ENCODE measurements at regions of chr11 and their contacts with region 1.

Region 1: GRCh38 chr11:114262681-114263512 is 33.3 kb upstream of the NNMT start:
- DNase-seq: peak; percentile 14
- ATAC-seq: peak; percentile 65
- H3K4me3 Mint-ChIP-seq: no peak overlapping the region
- H3K27ac Mint-ChIP-seq: no peak overlapping the region
- H3K4me1 Mint-ChIP-seq: no peaks in the 10 kb centered on the region
- H3K27me3 Mint-ChIP-seq: peaks cover 2% of the 10 kb centered on the region
- CTCF ChIP-seq: peak; percentile 48

Region 2: GRCh38 chr11:113994077-113994954 is 268.6 kb before region 1 on chr11:
- CTCF ChIA-PET with region 1: interaction called, 168 read pairs
- POLR2A ChIA-PET with region 1: no interaction called
- intact Hi-C with region 1: loop called (anchors 1 kb)
- DNase-seq: peak; percentile 40
- ATAC-seq: no peak
- H3K4me3 Mint-ChIP-seq: no peak overlapping the region
- H3K27ac Mint-ChIP-seq: no peak overlapping the region
- H3K4me1 Mint-ChIP-seq: no peaks in the 10 kb centered on the region
- H3K27me3 Mint-ChIP-seq: peaks cover 24% of the 10 kb centered on the region
- CTCF ChIP-seq: peak; percentile 71

Region 3: GRCh38 chr11:114044042-114044871 is 218.6 kb before region 1 on chr11:
- CTCF ChIA-PET with region 1: interaction called, 210 read pairs
- POLR2A ChIA-PET with region 1: no interaction called
- intact Hi-C with region 1: no loop called
- DNase-seq: peak; percentile 24
- ATAC-seq: peak; percentile 27
- H3K4me3 Mint-ChIP-seq: no peak overlapping the region
- H3K27ac Mint-ChIP-seq: no peak overlapping the region
- H3K4me1 Mint-ChIP-seq: peaks cover 3% of the 10 kb centered on the region
- H3K27me3 Mint-ChIP-seq: no peaks in the 10 kb centered on the region
- CTCF ChIP-seq: no peak

Region 4: GRCh38 chr11:114082767-114083181 is 180.1 kb before region 1 on chr11:
- CTCF ChIA-PET with region 1: interaction called, 11 read pairs
- POLR2A ChIA-PET with region 1: no interaction called
- intact Hi-C with region 1: no loop called
- DNase-seq: no peak
- ATAC-seq: no peak
- H3K4me3 Mint-ChIP-seq: no peak overlapping the region
- H3K27ac Mint-ChIP-seq: no peak overlapping the region
- H3K4me1 Mint-ChIP-seq: peaks cover 46% of the 10 kb centered on the region
- H3K27me3 Mint-ChIP-seq: peaks cover 10% of the 10 kb centered on the region
- CTCF ChIP-seq: no peak

Region 5: DNA sequence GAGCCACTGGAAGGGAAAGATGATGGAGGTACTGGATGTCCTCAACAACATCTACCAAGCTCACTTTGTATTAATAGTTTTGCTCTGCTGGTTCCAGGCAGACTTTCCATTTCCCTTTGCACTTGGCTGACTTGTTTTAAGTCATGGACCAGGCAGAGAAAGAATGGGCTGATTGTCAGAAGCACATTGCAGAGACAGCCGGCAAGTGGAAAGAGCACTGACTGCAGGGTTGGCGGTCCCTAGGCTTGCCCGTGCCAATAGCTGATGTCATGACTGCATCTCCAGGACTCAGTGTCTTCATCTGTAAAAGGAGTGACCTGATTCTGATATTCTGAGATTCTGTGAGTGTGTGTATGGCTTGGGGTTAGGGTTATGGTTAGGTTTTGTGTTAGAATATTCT is 12.4 kb after region 1 on chr11:
- CTCF ChIA-PET with region 1: interaction called, 20 read pairs
- POLR2A ChIA-PET with region 1: no interaction called
- intact Hi-C with region 1: no loop called
- DNase-seq: no peak
- ATAC-seq: no peak
- H3K4me3 Mint-ChIP-seq: no peak overlapping the region
- H3K27ac Mint-ChIP-seq: no peak overlapping the region
- H3K4me1 Mint-ChIP-seq: no peaks in the 10 kb centered on the region
- H3K27me3 Mint-ChIP-seq: peaks cover 49% of the 10 kb centered on the region
- CTCF ChIP-seq: no peak

Region 6: GRCh38 chr11:114295676-114296604 is 33.0 kb after region 1 on chr11 and contains the start of gene NNMT:
- CTCF ChIA-PET with region 1: no interaction called
- POLR2A ChIA-PET with region 1: no interaction called
- intact Hi-C with region 1: no loop called
- DNase-seq: no peak
- ATAC-seq: no peak
- H3K4me3 Mint-ChIP-seq: no peak within 1 kb of the TSS
- H3K27ac Mint-ChIP-seq: no peak within 1 kb of the TSS
- H3K4me1 Mint-ChIP-seq: no peaks in the 10 kb centered on the region
- H3K27me3 Mint-ChIP-seq: peaks cover 14% of the 10 kb centered on the region
- CTCF ChIP-seq: no peak
- total RNA-seq, gene NNMT: not detected

Region 7: GRCh38 chr11:114317787-114318137 is 54.9 kb after region 1 on chr11:
- CTCF ChIA-PET with region 1: no interaction called
- POLR2A ChIA-PET with region 1: no interaction called
- intact Hi-C with region 1: no loop called
- DNase-seq: no peak
- ATAC-seq: no peak
- H3K4me3 Mint-ChIP-seq: no peak overlapping the region
- H3K27ac Mint-ChIP-seq: no peak overlapping the region
- H3K4me1 Mint-ChIP-seq: peaks cover 10% of the 10 kb centered on the region
- H3K27me3 Mint-ChIP-seq: peaks cover 5% of the 10 kb centered on the region
- CTCF ChIP-seq: no peak